H1 (cell line): ENCODE measurements at regions of chr1 and their contacts with region 1.

Region 1: GRCh38 chr1:229192031-229192430 is 78.9 kb upstream of the RAB4A start:
- DNase-seq: no peak
- H3K4me3 ChIP-seq: no peak overlapping the region
- H3K27ac ChIP-seq: no peak overlapping the region
- H3K4me1 ChIP-seq: peaks cover 0 to 11% (median 7%) of the 10 kb centered on the region in 4 experiments; a peak in 4 of 7 replicates
- H3K27me3 ChIP-seq: no peaks in the 10 kb centered on the region
- CTCF ChIP-seq: no peak
- EP300 ChIP-seq: no peak
- POLR2A ChIP-seq: no peak
- RAD21 ChIP-seq: no peak

Region 2: DNA sequence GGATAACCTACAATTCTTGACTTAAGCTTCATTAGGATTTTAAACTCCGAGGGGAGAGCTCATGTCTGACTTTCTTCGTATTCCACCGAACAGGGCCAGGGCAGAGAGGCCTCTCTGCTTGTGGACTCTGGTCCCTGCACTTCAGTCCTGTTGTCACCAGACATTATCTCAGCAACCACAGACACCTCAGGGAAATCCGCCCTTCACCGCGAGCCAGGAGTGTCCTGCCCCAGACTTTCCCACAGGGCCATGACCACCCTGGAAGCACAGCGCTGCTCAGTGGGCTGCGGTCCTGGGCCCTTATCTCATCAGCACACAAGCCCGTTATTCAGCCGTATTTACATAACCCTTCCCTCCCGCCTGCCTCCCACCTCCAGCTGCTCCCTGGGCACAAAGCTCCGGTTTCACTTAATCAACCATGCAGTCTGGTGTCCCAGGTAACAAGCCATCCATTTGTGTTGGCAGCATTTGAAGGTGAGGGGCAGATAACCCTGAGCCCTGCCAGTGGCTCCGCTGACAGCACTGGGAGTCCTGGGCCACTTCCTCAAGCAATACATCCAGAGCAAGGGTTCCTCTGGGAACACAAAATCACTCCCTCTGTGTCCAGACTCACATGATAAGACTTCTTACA is 43.9 kb before region 1 on chr1:
- CTCF ChIA-PET with region 1: no interaction called
- POLR2A ChIA-PET with region 1: no interaction called
- DNase-seq: peak in 1 of 2 experiments; percentile 15
- H3K4me3 ChIP-seq: no peak overlapping the region
- H3K27ac ChIP-seq: no peak overlapping the region
- H3K4me1 ChIP-seq: peaks cover 4 to 20% (median 14%) of the 10 kb centered on the region in 4 experiments
- H3K27me3 ChIP-seq: peaks cover 0 to 4% (median 3%) of the 10 kb centered on the region in 4 experiments; a peak in 1 of 7 replicates
- CTCF ChIP-seq: no peak
- EP300 ChIP-seq: no peak
- POLR2A ChIP-seq: no peak
- RAD21 ChIP-seq: peak in 1 of 2 experiments; percentile 5; a peak in 1 of 4 replicates

Region 3: GRCh38 chr1:229203030-229203751 is 11.2 kb after region 1 on chr1:
- CTCF ChIA-PET with region 1: interaction called, 6 read pairs
- POLR2A ChIA-PET with region 1: interaction called, 10 read pairs
- DNase-seq: peak; percentile 47 to 82
- H3K4me3 ChIP-seq: no peak overlapping the region
- H3K27ac ChIP-seq: no peak overlapping the region
- H3K4me1 ChIP-seq: peaks cover 6 to 22% (median 12%) of the 10 kb centered on the region in 4 experiments
- H3K27me3 ChIP-seq: no peaks in the 10 kb centered on the region
- CTCF ChIP-seq: no peak
- EP300 ChIP-seq: no peak
- POLR2A ChIP-seq: no peak
- RAD21 ChIP-seq: no peak

Region 4: GRCh38 chr1:229213797-229214196 is 21.8 kb after region 1 on chr1:
- CTCF ChIA-PET with region 1: no interaction called
- POLR2A ChIA-PET with region 1: no interaction called
- DNase-seq: no peak
- H3K4me3 ChIP-seq: no peak overlapping the region
- H3K27ac ChIP-seq: no peak overlapping the region
- H3K4me1 ChIP-seq: no peaks in the 10 kb centered on the region
- H3K27me3 ChIP-seq: no peaks in the 10 kb centered on the region
- CTCF ChIP-seq: no peak
- EP300 ChIP-seq: no peak
- POLR2A ChIP-seq: no peak
- RAD21 ChIP-seq: no peak